ENCODE measurements at regions of chr12 and their contacts with region 1.

Region 1: GRCh38 chr12:53738406-53739213 is 11.4 kb upstream of the CALCOCO1 start:
- DNase-seq: no peak
- H3K4me3 ChIP-seq: no peak overlapping the region
- CTCF ChIP-seq: no peak

Region 2: DNA sequence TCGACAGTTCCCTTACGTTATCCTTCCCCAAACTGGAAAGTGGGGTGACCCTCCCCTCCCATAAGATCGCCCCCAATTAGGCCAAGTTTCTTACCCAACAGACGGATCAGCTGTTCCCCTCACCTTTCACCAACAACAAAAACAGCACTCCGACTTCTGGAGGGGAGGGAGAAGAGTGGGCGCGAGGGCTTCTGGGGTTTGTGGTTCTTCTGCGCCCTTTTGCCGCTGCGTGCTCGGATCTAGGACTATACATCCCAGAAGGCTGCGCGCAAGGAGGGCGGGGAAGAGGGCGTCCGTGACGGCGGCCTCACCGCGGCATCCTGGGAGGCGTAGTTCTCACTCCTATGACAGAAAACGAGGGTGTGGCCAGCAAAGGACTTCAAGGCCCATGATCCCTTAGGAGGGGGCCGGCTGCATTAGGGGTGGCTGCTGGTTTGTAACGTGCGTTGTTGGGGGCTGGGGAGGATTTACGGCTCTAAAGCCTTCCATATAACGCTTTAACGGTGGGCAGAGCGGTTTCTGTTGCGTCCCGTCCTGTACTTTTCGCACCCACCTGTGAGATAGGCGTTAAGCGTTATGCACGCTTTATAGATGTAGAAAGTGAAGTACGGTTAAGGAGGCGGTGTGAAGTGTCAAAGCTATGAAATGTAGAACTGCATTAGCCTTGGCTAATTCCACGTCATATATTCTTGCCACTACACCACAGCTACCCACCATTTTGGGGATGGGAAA is 11.1 kb before region 1 on chr12 and contains the start of gene CALCOCO1:
- CTCF ChIA-PET with region 1: interaction called, 668 read pairs
- POLR2A ChIA-PET with region 1: no interaction called
- DNase-seq: peak; percentile 80
- H3K4me3 ChIP-seq: peak within 1 kb of the TSS; percentile 95
- CTCF ChIP-seq: no peak

Region 3: DNA sequence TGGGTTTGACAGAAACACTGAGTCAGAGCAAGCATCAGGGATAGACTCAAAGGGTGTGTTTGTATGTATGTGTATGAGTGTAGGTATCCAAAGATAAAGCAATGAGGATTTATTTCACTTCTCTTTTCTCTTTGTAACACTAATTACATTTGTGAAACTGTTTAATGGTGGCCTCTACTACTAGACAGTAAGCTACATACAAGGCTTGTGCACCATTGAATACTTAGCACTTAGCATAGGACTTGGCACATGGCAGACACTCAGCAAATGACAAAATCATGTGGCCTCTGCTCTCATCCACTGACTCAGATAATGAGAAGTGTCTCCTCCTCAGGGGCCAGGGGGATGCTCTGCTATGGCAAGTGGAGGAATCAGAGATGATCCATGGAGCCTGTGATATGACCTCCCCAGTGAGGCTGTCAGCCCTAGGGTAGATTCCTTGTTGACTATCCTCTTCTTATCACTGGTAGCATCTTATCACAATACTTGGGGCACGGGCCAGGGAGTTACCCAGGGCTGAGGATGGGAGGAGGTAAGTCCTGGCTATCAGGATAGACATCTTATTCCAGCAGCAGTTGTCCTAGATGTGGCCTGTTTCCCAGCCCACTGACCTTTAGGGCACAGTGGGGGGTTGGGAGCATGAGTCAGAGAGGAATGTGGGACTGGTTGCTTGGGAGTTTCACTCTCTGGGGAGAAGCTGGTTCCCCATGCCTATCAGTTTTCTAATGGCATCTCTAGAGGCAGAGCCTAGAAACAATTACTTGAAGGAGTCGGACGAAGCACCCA is 128.8 kb after region 1 on chr12:
- CTCF ChIA-PET with region 1: no interaction called
- POLR2A ChIA-PET with region 1: no interaction called
- DNase-seq: no peak
- H3K4me3 ChIP-seq: no peak overlapping the region
- CTCF ChIP-seq: no peak

Measured in AG04449 (cell line).